CD8-positive, alpha-beta T cell (primary cell): ENCODE measurements at regions of chr21 and their contacts with region 1.

Region 1: DNA sequence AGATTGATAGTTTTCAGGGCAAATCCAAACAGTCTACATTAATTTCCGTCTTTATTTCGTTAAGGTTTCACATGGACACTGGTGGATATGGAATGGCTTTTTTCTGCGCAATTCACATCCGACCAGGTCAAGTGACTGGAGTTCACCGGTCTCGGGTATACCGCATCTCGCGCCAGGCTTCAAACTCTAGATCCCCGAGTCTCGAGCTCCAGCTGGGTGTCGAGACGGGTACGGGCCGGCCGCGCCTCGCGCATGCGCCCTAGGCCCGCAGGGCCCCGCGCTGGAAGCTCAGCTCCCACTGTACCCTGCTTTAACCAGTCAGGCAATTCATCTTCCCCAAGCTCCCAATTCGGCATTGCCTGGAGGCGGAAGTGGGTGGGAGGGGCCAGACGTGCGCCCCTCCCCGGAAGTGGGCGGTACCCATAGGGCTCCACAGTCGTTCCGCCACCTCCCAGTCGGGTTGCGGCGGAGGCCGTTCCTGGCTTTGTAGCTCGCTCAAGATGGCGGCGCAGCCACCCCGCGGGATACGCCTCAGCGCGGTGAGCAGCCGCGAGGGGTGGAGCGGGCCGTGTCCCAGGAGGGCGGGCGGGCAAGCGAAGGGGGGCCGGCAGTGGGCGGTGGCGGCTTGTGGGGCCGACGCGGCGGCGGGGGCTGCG is at the start of gene MORC3:
- DNase-seq: peak; percentile 96 to 99 (median 98)
- ATAC-seq: peak; percentile 87
- H3K4me3 ChIP-seq: peak within 1 kb of the TSS; percentile 63 to 74
- H3K4me3 Mint-ChIP-seq: peak within 1 kb of the TSS; percentile 94
- H3K27ac ChIP-seq: peak within 1 kb of the TSS; percentile 84 to 85
- H3K27ac Mint-ChIP-seq: peak within 1 kb of the TSS; percentile 98
- H3K4me1 ChIP-seq: peaks cover 18% of the 10 kb centered on the region
- H3K4me1 Mint-ChIP-seq: peaks cover 36% of the 10 kb centered on the region
- H3K27me3 ChIP-seq: no peaks in the 10 kb centered on the region
- H3K27me3 Mint-ChIP-seq: no peaks in the 10 kb centered on the region
- CTCF ChIP-seq: no peak
- total RNA-seq, gene MORC3: 48.7 to 52.1 TPM

Region 2: GRCh38 chr21:36135391-36136102 is 184.3 kb before region 1 on chr21:
- CTCF ChIA-PET with region 1: interaction called, 3 read pairs
- POLR2A ChIA-PET with region 1: interaction called, 11 read pairs
- intact Hi-C with region 1: no loop called
- DNase-seq: peak in 7 of 9 experiments; percentile 37 to 74 (median 56)
- ATAC-seq: peak; percentile 72
- H3K4me3 ChIP-seq: peak overlapping the region; percentile 68 to 77
- H3K4me3 Mint-ChIP-seq: peak overlapping the region; percentile 93
- H3K27ac ChIP-seq: peak overlapping the region; percentile 34 to 38
- H3K27ac Mint-ChIP-seq: peak overlapping the region; percentile 87
- H3K4me1 ChIP-seq: peaks cover 20% of the 10 kb centered on the region
- H3K4me1 Mint-ChIP-seq: peaks cover 19% of the 10 kb centered on the region
- H3K27me3 ChIP-seq: no peaks in the 10 kb centered on the region
- H3K27me3 Mint-ChIP-seq: no peaks in the 10 kb centered on the region
- CTCF ChIP-seq: no peak

Region 3: DNA sequence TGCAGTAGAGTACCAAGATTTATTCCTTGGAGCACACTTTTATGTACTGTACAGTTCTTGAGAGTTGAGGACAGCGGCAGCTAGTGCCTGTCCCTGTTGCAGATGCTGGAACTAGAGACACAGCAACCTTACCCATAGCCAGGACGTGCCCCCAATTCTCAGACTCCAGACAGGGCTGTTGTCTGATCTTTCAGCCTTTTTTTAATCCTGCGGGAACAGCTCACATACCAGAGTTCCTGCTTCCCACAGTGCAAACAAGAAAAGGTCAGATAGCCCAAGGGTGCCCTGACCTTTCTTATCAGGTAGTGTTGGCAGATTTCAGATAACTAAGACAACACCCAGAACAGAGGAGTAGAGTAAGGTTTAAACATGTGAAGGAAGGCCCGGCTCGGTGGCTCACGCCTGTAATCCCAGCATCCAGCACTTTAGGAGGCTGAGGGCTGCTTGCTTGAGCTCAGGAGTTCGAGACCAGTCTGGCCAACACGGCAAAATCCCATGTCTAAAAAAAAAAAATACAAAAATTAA is 84.8 kb before region 1 on chr21:
- CTCF ChIA-PET with region 1: no interaction called
- POLR2A ChIA-PET with region 1: no interaction called
- intact Hi-C with region 1: no loop called
- DNase-seq: no peak
- ATAC-seq: no peak
- H3K4me3 ChIP-seq: no peak overlapping the region
- H3K4me3 Mint-ChIP-seq: no peak overlapping the region
- H3K27ac ChIP-seq: no peak overlapping the region
- H3K27ac Mint-ChIP-seq: no peak overlapping the region
- H3K4me1 ChIP-seq: no peaks in the 10 kb centered on the region
- H3K4me1 Mint-ChIP-seq: peaks cover 8% of the 10 kb centered on the region
- H3K27me3 ChIP-seq: no peaks in the 10 kb centered on the region
- H3K27me3 Mint-ChIP-seq: no peaks in the 10 kb centered on the region
- CTCF ChIP-seq: no peak

Region 4: DNA sequence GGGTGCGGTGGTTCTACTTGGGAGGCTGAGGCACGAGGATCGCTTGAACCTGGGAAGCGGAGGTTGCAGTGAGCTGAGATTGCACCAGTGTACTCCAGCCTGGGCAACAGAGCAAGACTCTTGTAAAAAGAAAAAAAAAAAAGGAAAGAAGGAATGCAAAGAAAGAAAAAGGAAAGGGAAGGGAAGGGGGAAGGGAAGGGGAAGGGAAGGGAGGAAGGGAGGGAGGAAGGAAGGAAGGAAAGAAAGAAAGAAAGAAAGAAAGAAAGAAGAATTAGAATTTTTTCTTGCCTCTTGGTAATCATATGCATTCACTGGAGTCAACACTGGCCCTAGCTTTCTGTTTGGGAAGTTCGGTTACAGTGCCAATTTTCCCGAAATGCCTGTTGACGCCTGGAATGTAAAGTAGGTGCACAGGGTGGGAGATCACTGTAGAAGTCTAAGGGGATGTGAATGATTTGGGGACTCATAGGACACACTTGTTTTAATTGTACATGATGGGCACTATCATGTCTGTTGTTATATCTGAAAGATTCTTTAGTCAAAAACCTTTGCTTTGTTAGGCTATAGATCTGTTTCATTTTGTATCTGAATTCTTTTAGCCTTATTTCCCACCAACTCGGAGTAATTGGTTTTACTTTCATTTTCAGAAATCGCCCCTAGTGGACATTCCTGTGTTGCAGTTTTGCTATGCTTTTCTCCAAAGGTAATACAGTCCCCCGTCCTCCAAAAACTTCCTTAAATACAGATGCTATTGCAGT is 59.7 kb before region 1 on chr21:
- CTCF ChIA-PET with region 1: interaction called, 6 read pairs
- POLR2A ChIA-PET with region 1: interaction called, 8 read pairs
- intact Hi-C with region 1: loop called (anchors 1 to 2 kb)
- DNase-seq: peak in 8 of 9 experiments; percentile 19 to 82 (median 49)
- ATAC-seq: peak; percentile 93
- H3K4me3 ChIP-seq: peak overlapping the region; percentile 53 to 55
- H3K4me3 Mint-ChIP-seq: peak overlapping the region; percentile 86
- H3K27ac ChIP-seq: peak overlapping the region; percentile 53 to 85
- H3K27ac Mint-ChIP-seq: peak overlapping the region; percentile 91
- H3K4me1 ChIP-seq: peaks cover 9% of the 10 kb centered on the region
- H3K4me1 Mint-ChIP-seq: peaks cover 12% of the 10 kb centered on the region
- H3K27me3 ChIP-seq: no peaks in the 10 kb centered on the region
- H3K27me3 Mint-ChIP-seq: no peaks in the 10 kb centered on the region
- CTCF ChIP-seq: peak; percentile 83

Region 5: GRCh38 chr21:36297921-36298594 is 21.8 kb before region 1 on chr21:
- CTCF ChIA-PET with region 1: interaction called, 41 read pairs
- POLR2A ChIA-PET with region 1: interaction called, 106 read pairs
- intact Hi-C with region 1: loop called (anchors 1 kb)
- DNase-seq: peak; percentile 43 to 92 (median 79)
- ATAC-seq: peak; percentile 98
- H3K4me3 ChIP-seq: peak overlapping the region; percentile 43 to 47
- H3K4me3 Mint-ChIP-seq: peak overlapping the region; percentile 85
- H3K27ac ChIP-seq: peak overlapping the region; percentile 72 to 96
- H3K27ac Mint-ChIP-seq: peak overlapping the region; percentile 97
- H3K4me1 ChIP-seq: peaks cover 28% of the 10 kb centered on the region
- H3K4me1 Mint-ChIP-seq: peaks cover 37% of the 10 kb centered on the region
- H3K27me3 ChIP-seq: no peaks in the 10 kb centered on the region
- H3K27me3 Mint-ChIP-seq: no peaks in the 10 kb centered on the region
- CTCF ChIP-seq: no peak

Region 6: GRCh38 chr21:36385233-36386030 is 65.5 kb after region 1 on chr21 and contains the start of gene CHAF1B:
- CTCF ChIA-PET with region 1: no interaction called
- POLR2A ChIA-PET with region 1: no interaction called
- intact Hi-C with region 1: no loop called
- DNase-seq: peak; percentile 62 to 88 (median 79)
- ATAC-seq: peak; percentile 98
- H3K4me3 ChIP-seq: peak within 1 kb of the TSS; percentile 63 to 66
- H3K4me3 Mint-ChIP-seq: peak within 1 kb of the TSS; percentile 86
- H3K27ac ChIP-seq: peak within 1 kb of the TSS in 1 of 2 experiments; percentile 37
- H3K27ac Mint-ChIP-seq: peak within 1 kb of the TSS; percentile 55
- H3K4me1 ChIP-seq: peaks cover 6% of the 10 kb centered on the region
- H3K4me1 Mint-ChIP-seq: peaks cover 7% of the 10 kb centered on the region
- H3K27me3 ChIP-seq: no peaks in the 10 kb centered on the region
- H3K27me3 Mint-ChIP-seq: no peaks in the 10 kb centered on the region
- CTCF ChIP-seq: no peak
- total RNA-seq, gene CHAF1B: 2.0 to 3.9 TPM

Region 7: GRCh38 chr21:36419996-36420395 is 100.1 kb after region 1 on chr21:
- CTCF ChIA-PET with region 1: no interaction called
- POLR2A ChIA-PET with region 1: no interaction called
- intact Hi-C with region 1: no loop called
- DNase-seq: peak in 7 of 9 experiments; percentile 13 to 58 (median 48)
- ATAC-seq: no peak
- H3K4me3 ChIP-seq: no peak overlapping the region
- H3K4me3 Mint-ChIP-seq: no peak overlapping the region
- H3K27ac ChIP-seq: no peak overlapping the region
- H3K27ac Mint-ChIP-seq: no peak overlapping the region
- H3K4me1 ChIP-seq: no peaks in the 10 kb centered on the region
- H3K4me1 Mint-ChIP-seq: no peaks in the 10 kb centered on the region
- H3K27me3 ChIP-seq: no peaks in the 10 kb centered on the region
- H3K27me3 Mint-ChIP-seq: no peaks in the 10 kb centered on the region
- CTCF ChIP-seq: peak; percentile 54